Naive thymus-derived CD4-positive, alpha-beta T cell (primary cell): ENCODE measurements at regions of chr9 and their contacts with region 1.

Region 1: DNA sequence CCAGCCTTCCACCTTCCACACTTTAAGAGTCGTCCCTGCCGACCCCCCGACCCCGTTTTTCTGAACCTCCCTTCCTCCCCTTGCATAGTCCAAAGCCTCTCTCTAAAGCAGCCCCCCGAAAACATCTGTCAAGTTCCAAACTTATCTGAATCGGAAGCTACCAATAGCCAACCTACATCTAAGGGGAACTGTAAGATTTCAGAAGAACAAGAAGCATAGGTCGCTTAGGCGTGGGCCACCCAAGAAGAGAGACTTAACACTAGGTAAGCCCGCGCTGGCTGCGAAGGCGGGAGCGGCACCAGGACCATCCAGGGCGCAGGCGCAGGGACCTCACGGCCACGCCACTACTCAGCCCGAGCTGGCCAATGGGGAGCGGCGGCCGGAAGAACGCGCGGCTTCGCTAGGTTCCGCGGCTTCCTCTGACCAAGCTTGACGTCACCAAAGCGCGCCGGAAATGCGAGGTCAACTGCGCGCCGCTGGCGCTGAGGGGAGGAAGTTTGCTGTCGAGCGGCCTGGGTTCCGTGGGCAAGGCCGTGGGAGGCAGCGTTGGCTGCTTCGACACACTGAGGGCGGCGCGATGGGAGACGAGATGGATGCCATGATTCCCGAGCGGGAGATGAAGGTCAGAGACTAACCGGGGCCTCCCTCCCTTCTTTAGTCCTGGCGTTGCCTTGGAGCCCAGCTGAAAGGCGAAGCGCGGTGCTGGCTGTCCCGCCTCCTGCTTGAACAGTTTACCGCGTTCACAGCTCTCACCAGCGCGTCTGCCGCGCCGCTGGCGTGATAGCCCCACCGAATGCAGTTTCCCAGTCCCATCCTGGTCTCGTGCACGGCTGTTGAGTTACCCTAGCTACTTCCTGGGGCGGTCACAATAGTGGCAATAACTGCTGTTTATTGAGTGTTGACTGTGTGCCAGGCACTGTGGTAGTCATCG is at the start of gene NUP214:
- DNase-seq: peak; percentile 98 to 100 (median 99)
- ATAC-seq: peak; percentile 99
- H3K4me3 ChIP-seq: peak within 1 kb of the TSS; percentile 96
- H3K4me3 Mint-ChIP-seq: peak within 1 kb of the TSS; percentile 93 to 100 (median 99)
- H3K27ac ChIP-seq: peak within 1 kb of the TSS; percentile 88
- H3K27ac Mint-ChIP-seq: peak within 1 kb of the TSS; percentile 98 to 99 (median 99)
- H3K4me1 ChIP-seq: peaks cover 12 to 14% of the 10 kb centered on the region in 2 donors
- H3K4me1 Mint-ChIP-seq: peaks cover 12 to 45% (median 32%) of the 10 kb centered on the region in 7 donors
- H3K27me3 ChIP-seq: no peaks in the 10 kb centered on the region
- H3K27me3 Mint-ChIP-seq: peaks cover 0 to 5% (median 0%) of the 10 kb centered on the region in 5 donors
- total RNA-seq, gene NUP214: 74.9 to 116 (median 82.6) TPM

Region 2: DNA sequence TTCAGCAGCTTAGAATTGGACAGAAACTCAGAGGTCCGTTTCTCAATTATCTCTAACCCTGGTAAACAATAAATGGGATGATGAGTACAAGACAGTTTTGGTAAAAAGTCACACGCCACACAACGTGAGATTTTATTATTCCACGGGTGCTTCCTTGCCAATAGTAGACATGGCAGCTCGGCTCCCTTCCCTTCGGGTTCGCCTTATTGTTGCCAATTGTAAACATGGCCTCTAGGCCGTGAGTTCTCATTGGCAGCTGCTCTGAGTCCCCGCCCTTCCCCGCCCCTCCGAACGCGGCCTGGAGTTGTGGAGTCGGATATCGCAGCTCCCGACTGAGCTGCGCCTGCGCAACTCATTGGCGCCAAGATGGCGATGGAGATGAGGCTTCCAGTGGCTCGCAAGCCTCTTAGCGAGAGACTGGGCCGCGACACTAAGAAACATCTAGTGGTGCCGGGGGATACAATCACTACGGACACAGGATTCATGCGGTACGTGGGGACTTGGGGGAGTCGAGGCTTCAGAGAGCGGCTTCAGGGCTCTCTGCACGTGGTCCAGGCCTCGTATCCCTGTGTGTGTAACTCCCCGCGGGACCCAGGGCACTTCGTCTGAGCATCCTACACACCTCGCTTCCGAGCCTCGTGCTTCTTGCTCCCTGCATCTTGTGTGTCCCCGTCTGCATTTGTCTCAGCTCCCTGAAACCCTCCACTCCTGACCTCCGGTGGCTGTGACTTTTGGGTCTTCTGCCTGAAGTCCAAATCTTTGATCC is 431.8 kb before region 1 on chr9 and contains the start of gene EXOSC2:
- CTCF ChIA-PET with region 1: no interaction called
- POLR2A ChIA-PET with region 1: interaction called, 3 read pairs
- intact Hi-C with region 1: loop called in 1 of 2 experiments (anchors 1 kb)
- DNase-seq: peak; percentile 76 to 99 (median 89)
- ATAC-seq: peak; percentile 100
- H3K4me3 ChIP-seq: peak within 1 kb of the TSS; percentile 91
- H3K4me3 Mint-ChIP-seq: peak within 1 kb of the TSS; percentile 83 to 98 (median 95)
- H3K27ac ChIP-seq: peak within 1 kb of the TSS; percentile 85
- H3K27ac Mint-ChIP-seq: peak within 1 kb of the TSS; percentile 88 to 97 (median 94)
- H3K4me1 ChIP-seq: peaks cover 13 to 20% of the 10 kb centered on the region in 2 donors
- H3K4me1 Mint-ChIP-seq: peaks cover 20 to 54% (median 46%) of the 10 kb centered on the region in 7 donors
- H3K27me3 ChIP-seq: no peaks in the 10 kb centered on the region
- H3K27me3 Mint-ChIP-seq: no peaks in the 10 kb centered on the region
- total RNA-seq, gene EXOSC2: 44.2 to 60.7 (median 59.5) TPM

Region 3: GRCh38 chr9:131053896-131054295 is 71.5 kb before region 1 on chr9:
- CTCF ChIA-PET with region 1: no interaction called
- POLR2A ChIA-PET with region 1: no interaction called
- intact Hi-C with region 1: loop called in 1 of 2 experiments (anchors 2 kb)
- DNase-seq: no peak
- ATAC-seq: no peak
- H3K4me3 ChIP-seq: no peak overlapping the region
- H3K4me3 Mint-ChIP-seq: no peak overlapping the region
- H3K27ac ChIP-seq: no peak overlapping the region
- H3K27ac Mint-ChIP-seq: no peak overlapping the region
- H3K4me1 ChIP-seq: no peaks in the 10 kb centered on the region
- H3K4me1 Mint-ChIP-seq: no peaks in the 10 kb centered on the region
- H3K27me3 ChIP-seq: no peaks in the 10 kb centered on the region
- H3K27me3 Mint-ChIP-seq: no peaks in the 10 kb centered on the region

Region 4: DNA sequence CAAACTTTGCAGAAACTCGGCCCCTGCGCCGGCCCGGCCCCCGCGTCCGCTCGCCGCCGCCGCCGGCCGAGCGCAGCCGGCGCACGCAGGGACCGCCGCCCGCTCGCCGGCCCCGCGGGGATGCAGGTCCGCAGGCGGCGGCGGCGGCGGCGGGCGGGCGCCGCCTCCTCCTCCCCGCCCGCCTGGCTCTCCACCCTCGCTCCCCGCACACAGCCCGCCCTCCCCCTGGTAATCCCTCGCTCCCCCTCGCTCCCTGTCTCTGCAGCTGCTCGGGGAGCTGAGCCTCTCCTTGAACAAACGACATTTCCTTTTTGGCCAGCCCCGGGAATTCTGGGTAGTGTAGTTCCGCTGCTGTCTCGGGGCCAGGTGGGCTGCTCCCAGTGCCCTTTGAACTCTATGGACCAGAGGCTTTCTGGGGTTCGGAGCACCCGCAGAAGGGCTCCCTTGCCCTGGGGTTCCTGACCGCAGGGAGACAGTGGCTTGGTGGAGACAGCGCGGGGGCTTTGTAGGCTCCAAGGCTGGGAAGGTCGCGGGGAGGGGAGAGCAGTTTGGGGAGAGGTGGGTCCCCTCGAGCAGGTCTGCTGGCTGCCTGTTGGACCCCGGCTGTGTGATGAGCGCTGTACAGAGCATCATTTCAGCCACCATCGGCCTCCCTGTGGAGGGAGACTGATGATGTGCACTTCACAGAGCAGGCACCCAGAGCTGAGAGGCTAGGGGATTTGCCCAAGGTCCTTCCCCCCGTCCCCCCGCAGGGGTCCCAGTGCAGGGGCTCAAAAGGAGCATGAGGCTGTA is 152.7 kb after region 1 on chr9:
- CTCF ChIA-PET with region 1: no interaction called
- POLR2A ChIA-PET with region 1: interaction called, 3 read pairs
- intact Hi-C with region 1: loop called (anchors 2 to 5 kb)
- DNase-seq: peak in 8 of 9 donors; percentile 47 to 77 (median 62)
- ATAC-seq: peak; percentile 67
- H3K4me3 ChIP-seq: peak overlapping the region; percentile 55
- H3K4me3 Mint-ChIP-seq: peak overlapping the region; percentile 83 to 97 (median 88)
- H3K27ac ChIP-seq: peak overlapping the region; percentile 96
- H3K27ac Mint-ChIP-seq: peak overlapping the region; percentile 84 to 95 (median 91)
- H3K4me1 ChIP-seq: peaks cover 21 to 23% of the 10 kb centered on the region in 2 donors
- H3K4me1 Mint-ChIP-seq: peaks cover 17 to 34% (median 27%) of the 10 kb centered on the region in 7 donors
- H3K27me3 ChIP-seq: no peaks in the 10 kb centered on the region
- H3K27me3 Mint-ChIP-seq: peaks cover 0 to 18% (median 0%) of the 10 kb centered on the region in 5 donors

Region 5: GRCh38 chr9:131530920-131531832 is 405.8 kb after region 1 on chr9 and contains the start of gene UCK1:
- CTCF ChIA-PET with region 1: no interaction called
- POLR2A ChIA-PET with region 1: no interaction called
- intact Hi-C with region 1: loop called (anchors 1 to 5 kb)
- DNase-seq: peak; percentile 58 to 84 (median 71)
- ATAC-seq: peak; percentile 97
- H3K4me3 ChIP-seq: peak within 1 kb of the TSS; percentile 63
- H3K4me3 Mint-ChIP-seq: peak within 1 kb of the TSS; percentile 59 to 84 (median 77)
- H3K27ac ChIP-seq: peak within 1 kb of the TSS; percentile 90
- H3K27ac Mint-ChIP-seq: peak within 1 kb of the TSS in 6 of 9 donors; percentile 46 to 85 (median 68)
- H3K4me1 ChIP-seq: peaks cover 21 to 30% of the 10 kb centered on the region in 2 donors
- H3K4me1 Mint-ChIP-seq: peaks cover 15 to 46% (median 34%) of the 10 kb centered on the region in 7 donors
- H3K27me3 ChIP-seq: no peaks in the 10 kb centered on the region
- H3K27me3 Mint-ChIP-seq: no peaks in the 10 kb centered on the region
- total RNA-seq, gene UCK1: 21.8 to 40.1 (median 29.3) TPM

Region 6: DNA sequence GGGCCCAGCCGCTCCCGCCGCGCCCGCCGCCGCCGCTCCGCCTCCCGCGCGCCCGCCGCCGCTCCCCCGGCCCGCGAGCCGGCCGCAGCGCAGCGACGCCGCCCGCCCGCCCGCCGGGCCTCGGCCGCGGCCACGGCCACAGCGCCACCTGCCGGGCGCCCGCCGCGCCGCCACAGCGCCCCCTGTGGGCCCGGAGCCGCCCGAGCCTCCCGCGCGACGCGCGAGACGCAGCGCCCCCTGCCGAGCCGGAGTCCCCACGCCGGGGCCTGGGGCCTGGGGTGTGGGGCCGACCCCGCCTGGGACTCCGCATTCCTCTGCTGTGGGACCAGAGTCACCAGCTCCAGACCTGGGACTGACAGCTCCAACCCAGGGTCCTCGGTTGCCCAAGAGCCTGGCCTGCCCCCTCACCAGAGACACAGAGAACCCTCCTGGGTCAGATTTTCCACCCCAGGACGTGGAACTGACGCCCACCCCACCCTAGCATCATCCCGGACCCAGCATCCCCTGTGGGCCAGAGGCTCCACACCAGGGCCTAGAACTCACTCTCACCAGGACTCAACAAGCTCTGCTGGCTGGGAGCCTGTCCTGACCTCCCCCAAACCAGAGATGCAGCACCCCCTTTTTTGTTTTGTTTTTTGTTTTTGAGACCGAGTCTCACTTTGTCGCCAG is 614.7 kb after region 1 on chr9 and contains the start of gene RAPGEF1:
- CTCF ChIA-PET with region 1: no interaction called
- POLR2A ChIA-PET with region 1: no interaction called
- intact Hi-C with region 1: loop called in 1 of 2 experiments (anchors 10 kb)
- DNase-seq: peak; percentile 65 to 99 (median 80)
- ATAC-seq: peak; percentile 94
- H3K4me3 ChIP-seq: peak within 1 kb of the TSS; percentile 80
- H3K4me3 Mint-ChIP-seq: peak within 1 kb of the TSS; percentile 80 to 96 (median 92)
- H3K27ac ChIP-seq: peak within 1 kb of the TSS; percentile 68
- H3K27ac Mint-ChIP-seq: peak within 1 kb of the TSS; percentile 80 to 97 (median 92)
- H3K4me1 ChIP-seq: peaks cover 51 to 62% of the 10 kb centered on the region in 2 donors
- H3K4me1 Mint-ChIP-seq: peaks cover 43 to 63% (median 59%) of the 10 kb centered on the region in 7 donors
- H3K27me3 ChIP-seq: no peaks in the 10 kb centered on the region
- H3K27me3 Mint-ChIP-seq: no peaks in the 10 kb centered on the region
- total RNA-seq, gene RAPGEF1: 81.1 to 181 (median 85.8) TPM

Region 7: GRCh38 chr9:132169672-132170392 is 1044.4 kb after region 1 on chr9:
- CTCF ChIA-PET with region 1: no interaction called
- POLR2A ChIA-PET with region 1: no interaction called
- intact Hi-C with region 1: loop called in 1 of 2 experiments (anchors 10 kb)
- DNase-seq: peak in 8 of 9 donors; percentile 8 to 70 (median 51)
- ATAC-seq: peak; percentile 69
- H3K4me3 ChIP-seq: no peak overlapping the region
- H3K4me3 Mint-ChIP-seq: no peak overlapping the region
- H3K27ac ChIP-seq: no peak overlapping the region
- H3K27ac Mint-ChIP-seq: peak overlapping the region in 1 of 9 donors; percentile 6
- H3K4me1 ChIP-seq: no peaks in the 10 kb centered on the region
- H3K4me1 Mint-ChIP-seq: peaks cover 0 to under 1% (median 0%) of the 10 kb centered on the region in 7 donors
- H3K27me3 ChIP-seq: no peaks in the 10 kb centered on the region
- H3K27me3 Mint-ChIP-seq: peaks cover 25 to 38% (median 33%) of the 10 kb centered on the region in 5 donors